Naive thymus-derived CD4-positive, alpha-beta T cell (primary cell): ENCODE measurements at regions of chr9 and their contacts with region 1.

Region 1: DNA sequence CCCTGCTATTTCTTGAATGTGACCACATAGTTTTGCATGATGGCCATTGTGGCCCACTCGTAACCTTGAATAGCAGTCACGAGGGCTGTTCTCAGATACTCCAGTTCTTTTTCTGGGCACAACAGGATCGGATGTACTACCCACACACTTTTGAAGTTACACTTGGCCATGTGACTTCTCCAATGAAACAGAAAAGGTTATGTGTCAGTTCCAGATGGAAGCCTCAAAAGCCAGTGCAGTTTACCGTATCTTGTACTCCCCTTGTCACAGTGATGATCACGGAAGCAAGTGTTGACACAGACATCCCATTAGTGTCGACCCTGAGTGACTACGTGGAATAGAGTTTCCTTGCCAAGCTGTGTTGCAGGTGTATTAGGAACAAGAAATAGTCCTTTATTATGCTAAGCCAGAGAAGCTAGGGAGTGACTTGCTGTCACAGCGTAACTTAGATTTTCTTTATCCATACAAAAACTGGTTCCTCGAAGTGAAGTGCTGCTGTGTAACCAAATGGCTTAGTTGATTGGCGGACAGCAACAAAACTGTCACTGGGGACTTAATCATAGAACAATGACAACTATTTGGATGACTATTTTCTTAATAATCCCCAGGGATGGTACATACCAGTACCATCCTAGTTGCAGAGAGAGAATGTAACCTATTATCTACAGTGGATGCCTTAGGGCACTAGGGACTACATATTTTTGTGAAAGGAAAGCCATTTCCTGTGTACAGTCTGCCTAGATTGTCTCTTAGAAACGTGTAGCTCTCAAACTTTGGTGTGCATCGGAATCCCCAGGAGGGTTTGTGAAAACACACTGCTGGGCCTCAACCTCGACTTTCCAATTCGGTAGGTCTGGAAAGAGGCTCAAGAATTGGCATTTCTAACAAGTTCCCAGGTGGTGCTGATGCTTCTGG is 90.1 kb upstream of the DMRT1 start:
- DNase-seq: no peak
- ATAC-seq: no peak
- H3K4me3 ChIP-seq: no peak overlapping the region
- H3K4me3 Mint-ChIP-seq: peak overlapping the region in 3 of 10 donors; percentile 14 to 36 (median 35)
- H3K27ac ChIP-seq: no peak overlapping the region
- H3K27ac Mint-ChIP-seq: peak overlapping the region in 3 of 9 donors; percentile 18 to 60 (median 54)
- H3K4me1 ChIP-seq: peaks cover 19% of the 10 kb centered on the region in 2 donors
- H3K4me1 Mint-ChIP-seq: peaks cover 28 to 62% (median 49%) of the 10 kb centered on the region in 7 donors
- H3K27me3 ChIP-seq: no peaks in the 10 kb centered on the region
- H3K27me3 Mint-ChIP-seq: peaks cover 0 to 5% (median 0%) of the 10 kb centered on the region in 5 donors

Region 2: DNA sequence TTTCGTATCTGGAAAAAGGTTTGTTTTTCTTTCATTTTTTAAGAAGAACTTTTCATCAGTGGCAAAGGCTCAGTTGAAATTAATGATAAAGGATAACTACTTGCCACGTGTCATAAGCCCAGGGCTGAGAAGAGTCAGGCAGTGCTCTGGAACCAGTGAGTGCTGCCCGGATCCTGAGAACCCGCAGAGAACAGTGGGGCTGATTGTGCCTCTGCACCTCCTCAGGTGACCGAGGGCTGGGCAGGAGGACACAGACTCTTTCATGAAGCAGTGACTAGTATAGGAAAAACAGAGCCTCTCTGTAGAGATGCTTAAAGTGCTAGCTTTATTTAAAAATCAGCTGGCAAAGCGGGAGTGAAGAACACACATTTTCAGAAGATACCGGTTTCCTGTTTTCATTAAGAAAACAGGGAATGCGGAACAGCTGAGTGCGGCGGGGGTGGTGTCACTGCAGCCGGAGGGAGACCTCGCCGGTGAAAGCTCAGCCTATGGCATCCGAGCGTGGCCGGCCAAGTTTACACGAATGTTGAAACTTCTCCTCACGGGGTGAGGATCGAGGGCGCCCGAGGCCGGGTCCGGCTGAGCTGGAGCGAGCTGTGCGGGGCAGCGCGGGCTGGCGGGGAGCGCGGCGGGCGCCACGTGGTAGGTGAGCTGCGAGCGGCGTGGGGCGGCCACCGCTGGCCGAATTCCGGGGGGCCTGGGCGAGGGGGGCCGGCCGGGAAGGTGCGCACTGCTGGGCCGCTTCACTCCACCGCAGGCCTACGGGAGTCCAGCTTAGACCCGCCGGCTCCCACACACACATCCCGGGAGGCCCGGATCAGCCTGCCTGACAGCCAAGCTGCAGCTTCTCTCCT is 44.6 kb before region 1 on chr9:
- CTCF ChIA-PET with region 1: no interaction called
- POLR2A ChIA-PET with region 1: no interaction called
- intact Hi-C with region 1: loop called in 1 of 2 experiments (anchors 5 kb)
- DNase-seq: peak in 7 of 9 donors; percentile 5 to 37 (median 12)
- ATAC-seq: peak; percentile 73
- H3K4me3 ChIP-seq: peak overlapping the region; percentile 50
- H3K4me3 Mint-ChIP-seq: peak overlapping the region; percentile 73 to 95 (median 88)
- H3K27ac ChIP-seq: no peak overlapping the region
- H3K27ac Mint-ChIP-seq: peak overlapping the region; percentile 12 to 90 (median 42)
- H3K4me1 ChIP-seq: peaks cover 0 to 6% of the 10 kb centered on the region in 2 donors
- H3K4me1 Mint-ChIP-seq: peaks cover 7 to 17% (median 14%) of the 10 kb centered on the region in 7 donors
- H3K27me3 ChIP-seq: no peaks in the 10 kb centered on the region
- H3K27me3 Mint-ChIP-seq: peaks cover 0 to 36% (median 12%) of the 10 kb centered on the region in 5 donors